ENCODE measurements at regions of chr3 and their contacts with region 1.

Region 1: GRCh38 chr3:32488474-32489008 is 14.1 kb downstream of the CMTM6 start:
- DNase-seq: no peak

Region 2: DNA sequence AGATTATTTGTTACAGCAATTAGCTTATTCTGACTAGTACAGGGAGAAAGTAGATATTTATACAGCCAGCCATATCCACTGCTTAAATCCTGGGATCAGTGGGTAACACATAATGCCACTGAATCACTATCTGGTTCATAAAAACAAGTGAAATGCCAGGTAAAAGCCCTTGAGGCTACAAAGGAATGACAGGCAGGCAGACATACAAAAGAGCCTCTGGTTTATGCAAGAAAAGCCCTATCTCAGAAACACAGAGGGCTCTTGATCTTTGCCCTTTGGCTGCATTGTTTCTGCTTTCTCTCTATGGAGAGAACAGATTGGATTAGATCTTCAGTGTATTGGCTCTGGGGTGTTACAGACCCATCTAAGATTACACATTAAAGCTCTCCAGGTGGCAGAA is 1478.7 kb before region 1 on chr3:
- intact Hi-C with region 1: loop called in 1 of 2 experiments (anchors 5 kb)
- DNase-seq: no peak

Region 3: DNA sequence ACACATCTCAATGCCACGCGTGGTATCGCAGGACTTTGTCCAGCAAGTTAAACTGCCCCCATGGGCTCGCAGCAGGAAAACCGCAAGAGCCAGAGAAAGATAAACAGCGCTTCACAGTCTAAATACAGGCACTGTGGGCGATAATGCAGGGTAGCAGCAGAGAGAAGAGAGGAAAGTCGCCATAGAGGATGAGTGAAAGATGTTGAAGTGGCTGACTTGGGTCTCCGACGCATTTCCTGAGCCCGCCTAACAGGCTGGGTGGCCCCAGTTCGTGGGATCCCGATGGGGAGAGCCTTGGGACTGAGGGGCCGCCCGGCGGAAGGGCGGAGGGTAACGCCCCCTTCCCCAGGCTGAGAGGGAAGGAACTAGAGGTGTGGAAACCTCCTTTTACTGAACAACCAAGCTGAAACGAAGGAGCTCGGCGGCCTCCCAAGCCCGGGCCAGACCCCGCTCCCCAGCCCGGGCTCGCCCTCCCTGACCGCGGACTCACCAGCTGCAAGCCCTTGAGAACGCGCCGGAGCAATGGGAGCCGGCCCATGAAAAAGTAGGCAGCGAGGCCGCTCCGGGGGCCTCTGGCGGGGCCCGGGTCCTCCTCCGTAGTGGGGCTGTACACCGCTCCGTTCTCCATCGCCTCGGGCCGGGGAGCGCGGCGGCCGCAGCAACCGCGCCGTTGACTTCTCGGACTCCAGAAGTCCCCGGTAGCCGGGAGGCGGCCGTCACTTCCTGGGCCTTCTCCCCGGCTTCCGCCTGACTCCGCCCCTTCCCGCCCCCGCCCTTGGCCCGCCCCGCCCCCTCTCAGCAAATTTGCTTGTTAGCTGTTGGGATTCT is 13.8 kb after region 1 on chr3 and contains the start of gene CMTM6:
- intact Hi-C with region 1: no loop called
- DNase-seq: peak; percentile 94
- total RNA-seq, gene CMTM6: 31.7 to 32.0 TPM

Measured in posterior vena cava (tissue), 2 donors.